ENCODE measurements at regions of chr12 and their contacts with region 1.

Region 1: DNA sequence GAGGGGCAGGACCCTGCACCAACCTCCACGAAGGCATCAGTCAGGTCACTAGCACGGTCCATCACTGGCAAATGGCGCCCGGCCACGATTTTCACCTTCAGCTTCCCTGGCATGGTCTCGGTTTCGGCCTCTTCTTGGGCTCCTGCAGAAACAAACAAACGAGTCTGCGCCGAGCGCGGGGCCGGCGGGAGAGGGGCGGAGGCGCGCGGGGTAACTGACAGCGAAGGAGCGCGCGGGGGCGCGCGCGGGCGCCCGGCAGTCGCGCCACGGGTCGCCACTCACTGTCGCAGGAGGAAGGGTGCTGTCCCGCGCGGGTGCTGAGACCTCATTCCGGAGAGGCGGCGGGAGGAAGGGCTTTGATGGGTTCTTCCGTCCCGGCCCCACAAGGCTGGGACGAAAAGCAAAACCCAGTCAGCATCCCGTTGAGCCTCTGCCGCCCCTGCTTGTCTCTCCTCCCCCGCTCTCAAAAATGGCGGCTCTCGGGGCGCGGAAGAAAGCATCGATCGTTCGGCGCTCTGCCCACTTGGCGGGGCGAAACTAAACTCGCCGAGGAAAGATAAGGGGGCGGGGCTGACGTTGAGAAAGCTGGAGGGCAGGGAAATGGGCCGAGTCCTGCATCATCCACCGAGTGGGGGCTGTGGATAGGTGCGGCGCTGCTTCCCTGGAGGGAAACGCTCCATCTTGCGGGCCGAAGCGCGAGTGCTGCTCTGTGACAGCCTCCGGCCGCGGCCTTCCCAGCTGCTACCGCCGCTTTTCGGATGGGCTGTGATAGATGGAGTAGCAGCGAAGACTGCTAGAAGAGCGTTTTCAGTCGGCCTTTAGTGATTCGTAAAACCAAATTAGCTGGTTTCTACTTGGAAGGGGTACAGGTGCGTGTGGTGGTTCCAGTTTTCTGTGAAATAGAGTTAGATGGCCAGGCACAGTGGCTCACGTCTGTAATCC is at the start of gene C2CD5:
- DNase-seq: peak; percentile 99
- H3K4me3 ChIP-seq: peak within 1 kb of the TSS; percentile 91
- H3K27ac ChIP-seq: peak within 1 kb of the TSS; percentile 85
- H3K4me1 ChIP-seq: peaks cover 8% of the 10 kb centered on the region
- H3K27me3 ChIP-seq: no peaks in the 10 kb centered on the region
- CTCF ChIP-seq: peak; percentile 39
- total RNA-seq, gene C2CD5: 27.1 and 27.8 TPM in 2 replicates

Region 2: DNA sequence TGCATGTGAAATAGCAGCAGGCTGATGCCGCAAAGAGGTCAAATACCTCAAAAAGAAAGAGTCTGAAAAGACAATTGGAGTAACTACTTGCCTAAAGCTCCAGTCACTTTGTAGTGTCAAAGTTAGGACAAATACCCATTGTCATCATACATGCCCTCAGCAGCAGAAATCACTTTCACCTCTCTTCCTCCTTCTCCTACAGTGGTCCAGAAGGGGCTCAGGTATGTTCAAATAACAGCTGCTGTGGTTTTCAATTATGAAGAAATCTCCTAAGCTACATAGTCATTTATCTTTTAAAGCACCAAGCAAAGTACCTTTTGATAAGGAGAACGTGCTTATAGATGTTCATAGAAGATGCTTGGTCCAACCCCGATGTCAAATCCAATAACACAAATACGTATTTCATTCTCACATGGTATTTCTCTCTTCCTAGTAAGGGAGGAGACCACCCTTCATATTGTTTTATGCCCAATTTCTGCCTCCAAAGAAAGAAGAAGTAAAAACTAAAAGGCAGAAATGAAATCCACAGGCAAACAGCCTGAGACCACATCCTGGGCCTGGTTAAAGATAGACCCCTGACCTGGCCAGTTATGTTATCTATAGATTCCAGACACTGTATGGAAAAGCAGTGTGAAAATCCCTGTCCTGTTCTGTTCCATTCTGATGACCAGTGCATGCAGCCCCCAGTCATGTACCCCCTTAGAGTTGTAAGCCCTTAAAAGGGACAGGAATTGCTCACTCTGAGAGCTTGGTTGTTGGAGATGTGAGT is 963.4 kb before region 1 on chr12:
- CTCF ChIA-PET with region 1: no interaction called
- POLR2A ChIA-PET with region 1: no interaction called
- intact Hi-C with region 1: no loop called
- DNase-seq: no peak
- H3K4me3 ChIP-seq: no peak overlapping the region
- H3K27ac ChIP-seq: no peak overlapping the region
- H3K4me1 ChIP-seq: no peaks in the 10 kb centered on the region
- H3K27me3 ChIP-seq: peaks cover 25% of the 10 kb centered on the region
- CTCF ChIP-seq: no peak

Region 3: GRCh38 chr12:22624870-22625761 is 80.8 kb after region 1 on chr12 and contains the start of gene ETNK1:
- CTCF ChIA-PET with region 1: no interaction called
- POLR2A ChIA-PET with region 1: no interaction called
- intact Hi-C with region 1: loop called (anchors 2 kb)
- DNase-seq: peak; percentile 93
- H3K4me3 ChIP-seq: peak within 1 kb of the TSS; percentile 73
- H3K27ac ChIP-seq: peak within 1 kb of the TSS; percentile 96
- H3K4me1 ChIP-seq: peaks cover 14% of the 10 kb centered on the region
- H3K27me3 ChIP-seq: no peaks in the 10 kb centered on the region
- CTCF ChIP-seq: no peak
- total RNA-seq, gene ETNK1: 77.8 and 90.4 TPM in 2 replicates

Region 4: DNA sequence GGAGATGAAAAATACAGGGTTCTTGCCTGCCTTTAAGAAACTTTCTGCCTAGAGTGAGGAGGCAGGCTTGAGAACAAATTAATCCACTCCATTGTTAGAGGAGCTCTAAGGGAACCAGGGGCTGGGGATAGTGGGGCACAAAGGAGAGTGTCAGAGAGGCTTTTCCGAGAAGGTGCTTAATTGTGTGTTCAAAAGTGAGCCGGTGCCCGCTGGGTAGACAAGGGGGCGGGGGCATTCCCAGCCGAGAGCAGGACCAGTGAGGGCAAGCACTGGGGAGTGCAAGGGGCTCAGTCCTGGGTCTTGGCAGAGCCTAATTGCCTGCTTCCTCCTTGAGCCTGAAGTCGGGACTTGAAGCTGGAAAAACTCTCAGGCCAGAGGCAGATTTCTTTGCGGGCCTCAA is 458.1 kb after region 1 on chr12:
- CTCF ChIA-PET with region 1: no interaction called
- POLR2A ChIA-PET with region 1: no interaction called
- intact Hi-C with region 1: no loop called
- DNase-seq: no peak
- H3K4me3 ChIP-seq: no peak overlapping the region
- H3K27ac ChIP-seq: no peak overlapping the region
- H3K4me1 ChIP-seq: no peaks in the 10 kb centered on the region
- H3K27me3 ChIP-seq: peaks cover 2% of the 10 kb centered on the region
- CTCF ChIP-seq: no peak

Measured in A673 (cell line).